ENCODE measurements at regions of chr1 and their contacts with region 1.

Region 1: DNA sequence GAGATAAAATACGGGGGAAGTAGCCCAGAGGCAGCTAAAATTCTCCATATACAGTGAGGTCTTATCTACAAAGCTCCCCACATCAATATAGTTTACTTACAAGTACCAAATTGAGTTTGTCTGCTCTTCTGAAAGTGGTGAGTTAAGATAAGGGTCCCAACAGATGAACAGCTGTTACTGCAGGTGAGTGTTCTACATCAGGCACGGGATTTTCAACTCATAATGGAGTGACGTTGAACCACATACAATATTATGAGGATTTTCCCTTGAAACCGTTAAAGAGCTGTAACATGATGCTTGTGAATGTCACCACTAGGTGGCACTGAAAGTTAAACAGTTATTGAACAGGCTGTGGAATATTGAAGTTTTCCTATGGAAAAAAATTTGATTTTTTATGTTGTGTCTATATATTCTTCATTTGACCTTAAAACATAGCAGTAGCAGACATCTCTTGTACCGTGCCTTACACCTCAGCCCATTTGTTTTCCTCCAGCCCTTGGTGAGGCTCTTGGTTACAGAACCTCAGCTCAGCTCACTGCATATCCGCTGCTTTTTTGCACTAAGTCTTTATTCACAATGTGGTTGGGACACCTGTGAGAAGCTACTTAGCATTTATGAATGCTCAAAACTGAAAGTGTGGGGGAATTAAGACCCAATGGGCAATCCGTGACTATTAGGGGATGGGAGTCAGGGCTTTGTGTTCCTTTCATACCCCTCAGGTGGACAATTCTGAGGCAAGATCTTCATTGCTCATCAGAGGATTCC is 23.2 kb downstream of the CD1D start:
- DNase-seq: peak; percentile 35
- CTCF ChIP-seq: peak; percentile 74

Region 2: DNA sequence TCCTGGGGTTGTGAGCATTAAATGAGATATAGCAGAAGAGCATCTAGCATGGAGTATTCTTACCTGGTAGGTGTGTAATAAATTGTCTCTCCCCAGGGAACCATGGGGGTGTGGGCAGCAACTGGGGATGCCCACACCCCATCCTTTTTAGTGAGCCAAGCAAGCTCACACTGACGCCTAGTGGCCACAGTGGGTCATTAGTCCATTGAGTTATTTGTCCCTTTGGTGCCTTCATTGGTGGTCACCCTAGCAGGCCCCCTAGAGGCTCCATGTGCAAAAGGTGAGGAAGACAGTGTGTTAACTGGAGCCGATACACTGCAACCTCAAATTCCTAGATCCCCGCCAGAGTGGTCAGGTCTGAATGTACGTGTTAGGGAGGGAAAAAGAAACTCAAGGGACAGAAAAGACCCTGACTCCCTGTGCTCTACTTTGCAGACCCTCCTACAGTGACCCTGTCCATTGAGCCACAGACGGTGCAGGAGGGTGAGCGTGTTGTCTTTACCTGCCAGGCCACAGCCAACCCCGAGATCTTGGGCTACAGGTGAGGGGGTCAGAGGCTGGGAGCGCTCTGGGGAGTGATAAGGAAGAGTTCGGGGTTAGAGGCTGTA is 116.5 kb before region 1 on chr1:
- CTCF ChIA-PET with region 1: no interaction called
- POLR2A ChIA-PET with region 1: no interaction called
- DNase-seq: peak; percentile 75
- CTCF ChIP-seq: peak; percentile 74

Region 3: GRCh38 chr1:158163000-158163947 is 40.6 kb before region 1 on chr1:
- CTCF ChIA-PET with region 1: interaction called, 11 read pairs
- POLR2A ChIA-PET with region 1: no interaction called
- DNase-seq: peak; percentile 56
- CTCF ChIP-seq: no peak

Region 4: DNA sequence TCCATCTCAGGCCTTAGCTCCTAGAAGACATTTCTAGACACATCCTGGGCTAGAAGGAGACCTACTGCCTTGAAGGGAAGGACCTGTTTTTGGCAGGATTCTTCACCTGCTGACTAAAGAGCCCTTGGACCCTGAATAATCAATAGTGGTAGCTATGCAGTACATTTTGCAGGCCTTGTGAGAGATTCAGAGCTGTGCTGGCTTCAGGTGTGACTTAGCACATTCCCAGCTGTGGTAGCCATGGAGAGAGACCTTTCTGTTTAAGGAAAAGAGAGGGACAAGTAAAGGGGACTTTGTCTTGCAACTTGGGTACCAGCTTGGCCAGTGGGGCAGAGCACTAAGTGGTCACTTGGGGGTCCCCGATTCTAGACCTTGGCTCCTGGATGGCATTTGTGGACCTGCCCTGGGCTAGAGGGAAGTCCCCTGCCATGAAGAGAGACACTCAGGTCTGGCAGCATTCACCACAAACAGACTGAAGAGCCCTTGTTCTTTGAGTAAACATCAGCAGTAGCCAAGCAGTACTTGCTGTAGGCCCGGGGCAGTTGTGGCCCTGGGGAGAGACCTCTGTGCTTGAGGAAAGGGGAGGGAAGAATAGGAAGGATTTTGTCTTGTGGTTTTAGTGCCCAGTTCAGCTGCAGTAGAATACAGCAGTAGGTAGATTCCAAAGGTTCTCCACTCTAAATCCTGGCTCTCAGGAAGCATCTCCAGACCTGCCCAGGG is 24.2 kb after region 1 on chr1:
- CTCF ChIA-PET with region 1: interaction called, 10 read pairs
- POLR2A ChIA-PET with region 1: no interaction called
- DNase-seq: no peak
- CTCF ChIP-seq: no peak

Region 5: DNA sequence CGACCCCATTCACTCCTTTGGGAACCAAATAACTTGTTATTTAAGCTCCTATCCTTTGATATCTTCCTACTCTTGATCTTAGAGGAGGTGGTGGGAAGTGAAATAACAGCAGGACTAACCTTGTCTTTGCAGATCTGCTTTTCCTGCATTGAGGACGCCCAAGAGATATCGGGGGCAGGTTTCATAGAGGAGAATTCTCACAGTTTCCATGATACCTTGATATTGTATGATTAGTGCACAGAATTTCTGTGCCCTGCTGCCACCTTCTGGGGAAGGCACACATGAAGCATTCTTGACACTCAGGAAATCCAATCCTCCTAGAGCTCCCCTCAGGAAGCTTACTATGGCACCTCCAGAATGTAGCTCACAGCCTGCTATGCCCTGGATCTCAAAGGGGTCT is 125.9 kb after region 1 on chr1:
- CTCF ChIA-PET with region 1: interaction called, 53 read pairs
- POLR2A ChIA-PET with region 1: no interaction called
- DNase-seq: peak; percentile 51
- CTCF ChIP-seq: peak; percentile 53

Region 6: GRCh38 chr1:159071970-159072582 is 868.2 kb after region 1 on chr1:
- CTCF ChIA-PET with region 1: interaction called, 15 read pairs
- POLR2A ChIA-PET with region 1: no interaction called
- DNase-seq: peak; percentile 34
- CTCF ChIP-seq: peak; percentile 55